ENCODE measurements at regions of chr3 and their contacts with region 1.

Region 1: DNA sequence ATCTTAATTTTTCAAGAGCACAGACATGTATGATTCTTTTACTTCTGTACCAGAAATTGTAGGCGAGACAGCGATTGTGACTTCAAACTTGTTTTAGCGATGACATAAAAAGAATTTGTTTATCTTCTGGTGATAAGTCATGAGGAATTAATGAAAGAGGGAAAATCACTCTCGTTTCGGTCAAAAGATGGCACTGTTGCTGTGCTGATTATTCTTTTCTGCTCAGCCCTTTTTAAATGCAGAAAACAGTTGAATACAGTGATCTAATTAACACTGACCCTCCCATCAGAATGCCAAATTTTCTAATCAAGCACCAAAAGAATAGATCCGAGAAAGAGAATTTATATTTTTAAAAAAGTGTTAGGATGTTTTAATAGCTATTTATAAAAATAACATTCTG is 52.6 kb downstream of the NSUN3 start:
- DNase-seq: peak; percentile 68
- ATAC-seq: peak; percentile 55
- H3K4me3 ChIP-seq: no peak overlapping the region
- H3K27ac ChIP-seq: no peak overlapping the region
- H3K4me1 ChIP-seq: no peaks in the 10 kb centered on the region
- H3K27me3 ChIP-seq: no peaks in the 10 kb centered on the region
- CTCF ChIP-seq: peak; percentile 83

Region 2: DNA sequence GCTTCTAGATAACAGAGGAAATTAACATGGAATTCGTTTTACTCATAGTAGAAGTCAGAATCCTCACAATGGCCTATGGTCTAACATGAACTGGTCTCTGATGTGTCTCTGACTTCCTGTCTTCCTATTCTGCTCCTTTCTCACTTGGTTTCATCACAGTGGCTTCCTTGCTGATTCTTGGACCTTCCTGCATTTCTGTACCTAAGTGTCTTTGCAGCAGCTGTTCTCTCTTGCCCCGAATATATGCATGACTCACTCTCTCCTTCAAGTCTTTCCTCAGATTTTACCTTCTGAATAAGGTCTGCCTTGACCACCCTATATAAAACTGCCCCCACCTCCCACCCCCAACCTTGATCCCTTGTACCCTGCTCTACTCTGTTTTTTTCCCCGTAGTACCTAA is 121.4 kb before region 1 on chr3:
- CTCF ChIA-PET with region 1: no interaction called
- POLR2A ChIA-PET with region 1: no interaction called
- intact Hi-C with region 1: no loop called
- DNase-seq: no peak
- ATAC-seq: no peak
- H3K4me3 ChIP-seq: no peak overlapping the region
- H3K27ac ChIP-seq: no peak overlapping the region
- H3K4me1 ChIP-seq: no peaks in the 10 kb centered on the region
- H3K27me3 ChIP-seq: no peaks in the 10 kb centered on the region
- CTCF ChIP-seq: no peak

Region 3: GRCh38 chr3:94159062-94159828 is 43.8 kb after region 1 on chr3:
- CTCF ChIA-PET with region 1: no interaction called
- POLR2A ChIA-PET with region 1: no interaction called
- intact Hi-C with region 1: loop called (anchors 5 kb)
- DNase-seq: peak; percentile 65
- ATAC-seq: peak; percentile 74
- H3K4me3 ChIP-seq: peak overlapping the region; percentile 51
- H3K27ac ChIP-seq: peak overlapping the region; percentile 14
- H3K4me1 ChIP-seq: peaks cover 18% of the 10 kb centered on the region
- H3K27me3 ChIP-seq: no peaks in the 10 kb centered on the region
- CTCF ChIP-seq: no peak

Region 4: DNA sequence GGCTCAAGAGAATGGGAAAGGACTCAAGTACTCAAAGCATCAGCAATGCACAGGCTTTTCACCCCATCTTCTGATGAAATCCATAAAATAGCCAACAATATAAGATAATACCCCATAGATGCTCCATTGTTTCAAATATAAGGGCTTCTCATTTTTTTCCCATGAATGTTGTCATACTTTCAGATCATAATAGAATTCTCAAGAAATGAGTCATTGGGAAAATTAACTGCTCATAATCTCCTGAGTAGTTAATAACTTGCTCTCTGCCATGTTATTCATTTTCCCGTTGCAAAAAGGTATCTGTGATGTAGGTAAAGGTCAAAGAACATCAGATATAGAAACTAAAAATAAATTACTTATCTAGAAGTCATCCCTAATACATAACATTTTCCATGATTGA is 69.3 kb after region 1 on chr3:
- CTCF ChIA-PET with region 1: no interaction called
- POLR2A ChIA-PET with region 1: no interaction called
- intact Hi-C with region 1: loop called (anchors 5 kb)
- DNase-seq: peak; percentile 71
- ATAC-seq: peak; percentile 44
- H3K4me3 ChIP-seq: no peak overlapping the region
- H3K27ac ChIP-seq: peak overlapping the region; percentile 40
- H3K4me1 ChIP-seq: peaks cover 21% of the 10 kb centered on the region
- H3K27me3 ChIP-seq: no peaks in the 10 kb centered on the region
- CTCF ChIP-seq: no peak

Region 5: GRCh38 chr3:94206291-94206690 is 90.8 kb after region 1 on chr3:
- CTCF ChIA-PET with region 1: no interaction called
- POLR2A ChIA-PET with region 1: no interaction called
- intact Hi-C with region 1: no loop called
- DNase-seq: no peak
- ATAC-seq: peak; percentile 94
- H3K4me3 ChIP-seq: no peak overlapping the region
- H3K27ac ChIP-seq: no peak overlapping the region
- H3K4me1 ChIP-seq: no peaks in the 10 kb centered on the region
- H3K27me3 ChIP-seq: no peaks in the 10 kb centered on the region
- CTCF ChIP-seq: no peak

Region 6: GRCh38 chr3:94234177-94234788 is 118.8 kb after region 1 on chr3:
- CTCF ChIA-PET with region 1: no interaction called
- POLR2A ChIA-PET with region 1: no interaction called
- intact Hi-C with region 1: loop called (anchors 2 kb)
- DNase-seq: peak; percentile 70
- ATAC-seq: peak; percentile 86
- H3K4me3 ChIP-seq: no peak overlapping the region
- H3K27ac ChIP-seq: no peak overlapping the region
- H3K4me1 ChIP-seq: no peaks in the 10 kb centered on the region
- H3K27me3 ChIP-seq: no peaks in the 10 kb centered on the region
- CTCF ChIP-seq: peak; percentile 91

Region 7: GRCh38 chr3:94249585-94249984 is 134.1 kb after region 1 on chr3:
- CTCF ChIA-PET with region 1: no interaction called
- POLR2A ChIA-PET with region 1: no interaction called
- intact Hi-C with region 1: loop called (anchors 2 kb)
- DNase-seq: peak; percentile 81
- ATAC-seq: peak; percentile 74
- H3K4me3 ChIP-seq: no peak overlapping the region
- H3K27ac ChIP-seq: no peak overlapping the region
- H3K4me1 ChIP-seq: no peaks in the 10 kb centered on the region
- H3K27me3 ChIP-seq: peaks cover 37% of the 10 kb centered on the region
- CTCF ChIP-seq: peak; percentile 95

Region 8: GRCh38 chr3:94285870-94286269 is 170.4 kb after region 1 on chr3:
- CTCF ChIA-PET with region 1: no interaction called
- POLR2A ChIA-PET with region 1: no interaction called
- intact Hi-C with region 1: loop called (anchors 1 kb)
- DNase-seq: peak; percentile 65
- ATAC-seq: peak; percentile 76
- H3K4me3 ChIP-seq: no peak overlapping the region
- H3K27ac ChIP-seq: no peak overlapping the region
- H3K4me1 ChIP-seq: no peaks in the 10 kb centered on the region
- H3K27me3 ChIP-seq: no peaks in the 10 kb centered on the region
- CTCF ChIP-seq: peak; percentile 67

Region 9: DNA sequence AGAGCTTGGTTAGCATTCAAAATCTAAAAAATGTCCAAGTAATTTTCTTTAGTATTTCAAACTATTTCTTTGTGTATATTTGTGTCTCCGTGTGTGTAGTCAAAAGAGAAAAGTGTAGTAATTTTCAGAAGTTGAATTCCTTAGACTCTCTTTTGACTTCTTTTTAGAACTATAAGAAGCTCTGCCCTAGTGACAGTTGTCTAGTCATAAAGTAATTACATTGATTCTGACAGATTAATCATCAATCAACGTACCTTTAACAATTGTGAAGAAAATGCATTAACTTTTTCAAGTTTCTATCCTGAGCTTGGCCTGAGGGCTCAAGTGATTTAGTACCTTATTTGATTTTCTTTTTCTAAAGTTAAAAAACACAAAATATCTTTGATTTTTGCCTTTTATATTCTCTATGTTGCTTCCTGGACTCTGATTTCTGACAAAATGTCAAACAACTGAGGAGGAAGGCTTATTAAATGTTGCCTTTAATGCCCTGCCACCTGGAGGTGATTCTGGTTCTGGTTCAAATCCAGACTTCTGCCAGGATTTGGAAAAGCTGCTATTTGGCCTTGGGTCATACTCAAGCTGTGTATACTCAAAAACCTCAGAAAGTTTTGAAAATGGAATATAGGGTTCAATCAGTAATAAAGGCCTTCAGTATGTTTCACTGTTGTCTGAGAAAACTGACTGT is 601.0 kb after region 1 on chr3:
- CTCF ChIA-PET with region 1: no interaction called
- POLR2A ChIA-PET with region 1: no interaction called
- intact Hi-C with region 1: loop called (anchors 5 kb)
- DNase-seq: peak; percentile 43
- ATAC-seq: no peak
- H3K4me3 ChIP-seq: no peak overlapping the region
- H3K27ac ChIP-seq: no peak overlapping the region
- H3K4me1 ChIP-seq: no peaks in the 10 kb centered on the region
- H3K27me3 ChIP-seq: no peaks in the 10 kb centered on the region
- CTCF ChIP-seq: peak; percentile 57

Measured in PC-3 (cell line).